Adrenal gland (tissue), 19 donors: ENCODE measurements at regions of chr5 and their contacts with region 1.

Region 1: DNA sequence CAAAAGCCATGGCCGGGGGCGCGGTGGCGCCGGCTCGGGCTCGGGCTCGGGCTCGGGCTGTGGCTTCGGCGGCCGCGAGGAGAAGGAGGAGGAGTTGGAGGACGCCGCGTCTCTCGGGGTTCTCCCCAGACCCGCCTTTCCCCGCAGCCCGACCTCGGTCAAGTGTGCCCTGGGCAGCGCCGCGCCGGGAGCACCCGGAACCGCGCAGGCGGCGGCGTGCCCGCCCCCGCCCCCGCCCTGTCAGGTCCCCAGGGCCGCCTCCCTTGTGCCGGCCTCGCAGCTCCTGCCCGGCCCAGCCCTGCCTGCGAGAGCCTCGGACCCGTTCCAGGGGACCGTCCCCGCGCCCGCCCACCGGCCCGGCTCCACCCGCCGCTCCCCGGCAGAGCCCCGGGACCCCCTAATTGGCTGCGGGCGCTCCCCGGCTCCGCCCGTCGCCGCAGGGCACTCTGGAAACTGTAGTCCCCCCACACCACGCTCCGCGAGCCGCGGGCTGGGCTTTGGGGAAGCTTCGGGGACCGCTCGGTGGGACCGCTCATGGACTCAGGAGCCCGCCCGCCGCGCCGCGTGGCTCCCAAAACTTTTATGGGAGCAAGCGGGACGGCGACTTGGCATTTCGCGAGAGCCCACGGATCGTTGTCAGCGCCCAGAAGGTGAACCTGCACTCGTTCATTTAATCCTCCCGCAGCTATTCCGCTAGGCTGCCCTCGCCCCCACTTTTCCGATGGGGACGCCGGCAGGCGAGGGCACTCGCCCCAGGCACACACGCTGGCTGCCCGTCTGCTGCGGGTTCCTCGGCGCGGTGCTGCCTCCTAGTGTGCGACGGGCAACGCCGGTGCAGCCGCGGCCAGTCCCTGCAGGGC is at the start of gene STK10:
- DNase-seq: peak; percentile 93 to 95 (median 94)
- H3K4me3 ChIP-seq: peak within 1 kb of the TSS; percentile 21 to 88 (median 82)
- H3K27ac ChIP-seq: peak within 1 kb of the TSS; percentile 67 to 90 (median 84)
- H3K4me1 ChIP-seq: peaks cover 5 to 21% of the 10 kb centered on the region in 2 donors
- H3K27me3 ChIP-seq: no peaks in the 10 kb centered on the region
- CTCF ChIP-seq: peak; percentile 83 to 95 (median 86)
- POLR2A ChIP-seq: peak; percentile 63 to 74
- total RNA-seq, gene STK10: 6.6 to 39.1 (median 24.2) TPM

Region 2: GRCh38 chr5:172283020-172283861 is 95.0 kb after region 1 on chr5 and contains the start of gene UBTD2:
- intact Hi-C with region 1: loop called in 1 of 2 experiments (anchors 10 kb)
- DNase-seq: peak; percentile 82 to 89 (median 86)
- H3K4me3 ChIP-seq: peak within 1 kb of the TSS; percentile 63 to 83 (median 68)
- H3K27ac ChIP-seq: peak within 1 kb of the TSS; percentile 46 to 99 (median 87)
- H3K4me1 ChIP-seq: peaks cover 22 to 26% of the 10 kb centered on the region in 2 donors
- H3K27me3 ChIP-seq: no peaks in the 10 kb centered on the region
- CTCF ChIP-seq: peak in 5 of 6 experiments; percentile 27 to 54 (median 43)
- POLR2A ChIP-seq: peak in 1 of 2 donors; percentile 70
- total RNA-seq, gene UBTD2: 11.4 to 24.7 (median 17.8) TPM